Tibial artery (tissue), 4 donors: ENCODE measurements at regions of chr4 and their contacts with region 1.

Region 1: GRCh38 chr4:73019462-73020047 is 50.0 kb downstream of the COX18 start:
- DNase-seq: no peak
- H3K4me3 ChIP-seq: no peak overlapping the region
- H3K27ac ChIP-seq: no peak overlapping the region
- H3K4me1 ChIP-seq: peaks cover 0 to 10% (median 0%) of the 10 kb centered on the region in 4 donors
- H3K27me3 ChIP-seq: no peaks in the 10 kb centered on the region
- CTCF ChIP-seq: peak; percentile 65 to 76

Region 2: GRCh38 chr4:72505314-72505744 is 514.2 kb before region 1 on chr4:
- intact Hi-C with region 1: loop called (anchors 10 kb)
- DNase-seq: peak in 1 of 2 donors; percentile 16
- H3K4me3 ChIP-seq: no peak overlapping the region
- H3K27ac ChIP-seq: no peak overlapping the region
- H3K4me1 ChIP-seq: peaks cover 0 to 4% (median 0%) of the 10 kb centered on the region in 4 donors
- H3K27me3 ChIP-seq: no peaks in the 10 kb centered on the region
- CTCF ChIP-seq: peak; percentile 51 to 71

Region 3: DNA sequence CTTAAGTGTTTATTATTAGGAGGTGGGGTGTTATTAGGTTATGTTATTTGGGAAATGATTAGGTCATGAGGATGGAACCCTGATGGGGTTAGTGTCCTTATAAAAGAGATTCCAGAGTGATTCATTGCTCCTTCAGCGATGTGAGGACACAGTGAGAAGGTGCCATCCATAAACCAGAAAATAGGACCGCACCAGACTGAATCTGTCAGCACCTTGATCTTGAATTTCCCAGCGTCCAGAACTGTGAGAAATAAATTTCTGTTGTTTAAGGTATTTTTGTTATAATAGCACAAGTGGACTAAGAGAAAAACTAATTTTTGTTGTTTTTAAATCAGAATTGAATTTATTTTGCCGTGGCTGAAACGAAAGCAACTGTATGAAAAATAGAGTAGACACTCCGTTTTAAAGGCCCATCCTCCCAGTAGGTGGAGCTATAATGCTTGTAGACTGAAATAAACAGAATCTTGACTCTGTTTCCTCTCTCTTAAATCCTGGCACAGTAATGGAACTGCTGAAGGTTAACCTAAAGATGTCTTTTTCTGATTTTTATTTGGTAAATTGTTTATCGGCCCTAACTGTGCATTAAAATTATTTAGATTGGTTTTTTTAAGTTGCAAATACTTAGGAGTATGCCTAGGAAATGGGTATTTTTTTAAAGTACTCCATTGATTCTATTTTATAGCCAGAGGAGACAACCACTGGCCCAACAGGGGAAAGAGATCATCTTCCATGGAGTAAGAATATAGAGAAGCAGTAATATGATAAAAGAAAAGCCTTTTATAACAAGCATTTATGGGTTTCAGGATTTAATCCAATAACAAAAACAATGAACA is 317.4 kb before region 1 on chr4:
- intact Hi-C with region 1: loop called (anchors 2 kb)
- DNase-seq: peak in 1 of 2 donors; percentile 25
- H3K4me3 ChIP-seq: peak overlapping the region; percentile 40 to 47
- H3K27ac ChIP-seq: peak overlapping the region in 1 of 2 donors; percentile 17
- H3K4me1 ChIP-seq: no peaks in the 10 kb centered on the region
- H3K27me3 ChIP-seq: no peaks in the 10 kb centered on the region
- CTCF ChIP-seq: peak; percentile 66 to 74